ENCODE measurements at regions of chr3 and their contacts with region 1.

Region 1: GRCh38 chr3:155481089-155481488 is 187.6 kb upstream of the STRIT1 start:
- DNase-seq: no peak
- ATAC-seq: no peak
- H3K4me3 ChIP-seq: no peak overlapping the region
- H3K27ac ChIP-seq: no peak overlapping the region
- H3K4me1 ChIP-seq: no peaks in the 10 kb centered on the region
- H3K27me3 ChIP-seq: no peaks in the 10 kb centered on the region
- CTCF ChIP-seq: no peak
- EP300 ChIP-seq: no peak
- POLR2A ChIP-seq: no peak
- RAD21 ChIP-seq: no peak

Region 2: DNA sequence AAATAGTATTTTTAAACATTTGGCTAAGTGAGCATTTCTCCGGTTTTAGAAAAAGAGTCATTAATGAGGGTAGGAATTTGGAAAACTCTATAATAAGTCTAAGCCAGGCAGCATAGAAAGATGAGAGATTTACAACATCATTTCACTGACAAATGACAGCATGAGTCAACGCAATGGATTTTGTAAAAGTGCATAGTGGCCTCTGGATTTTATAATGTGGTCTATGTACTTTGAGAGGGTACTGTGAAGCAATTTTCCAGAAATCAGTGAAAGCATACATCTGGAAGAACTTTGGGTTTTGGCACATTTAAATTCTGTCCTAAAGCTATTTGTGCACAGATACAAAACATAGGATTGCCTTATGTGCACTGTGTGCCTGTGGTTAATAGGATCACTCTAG is 1809.7 kb after region 1 on chr3:
- CTCF ChIA-PET with region 1: no interaction called
- POLR2A ChIA-PET with region 1: no interaction called
- in situ Hi-C with region 1: no loop called
- intact Hi-C with region 1: loop called (anchors 5 kb)
- DNase-seq: no peak
- ATAC-seq: no peak
- H3K4me3 ChIP-seq: no peak overlapping the region
- H3K27ac ChIP-seq: no peak overlapping the region
- H3K4me1 ChIP-seq: no peaks in the 10 kb centered on the region
- H3K27me3 ChIP-seq: no peaks in the 10 kb centered on the region
- CTCF ChIP-seq: no peak
- EP300 ChIP-seq: no peak
- POLR2A ChIP-seq: no peak
- RAD21 ChIP-seq: no peak

Measured in HepG2 (cell line).